WTC11 (cell line): ENCODE measurements at regions of chr1 and their contacts with region 1.

Region 1: DNA sequence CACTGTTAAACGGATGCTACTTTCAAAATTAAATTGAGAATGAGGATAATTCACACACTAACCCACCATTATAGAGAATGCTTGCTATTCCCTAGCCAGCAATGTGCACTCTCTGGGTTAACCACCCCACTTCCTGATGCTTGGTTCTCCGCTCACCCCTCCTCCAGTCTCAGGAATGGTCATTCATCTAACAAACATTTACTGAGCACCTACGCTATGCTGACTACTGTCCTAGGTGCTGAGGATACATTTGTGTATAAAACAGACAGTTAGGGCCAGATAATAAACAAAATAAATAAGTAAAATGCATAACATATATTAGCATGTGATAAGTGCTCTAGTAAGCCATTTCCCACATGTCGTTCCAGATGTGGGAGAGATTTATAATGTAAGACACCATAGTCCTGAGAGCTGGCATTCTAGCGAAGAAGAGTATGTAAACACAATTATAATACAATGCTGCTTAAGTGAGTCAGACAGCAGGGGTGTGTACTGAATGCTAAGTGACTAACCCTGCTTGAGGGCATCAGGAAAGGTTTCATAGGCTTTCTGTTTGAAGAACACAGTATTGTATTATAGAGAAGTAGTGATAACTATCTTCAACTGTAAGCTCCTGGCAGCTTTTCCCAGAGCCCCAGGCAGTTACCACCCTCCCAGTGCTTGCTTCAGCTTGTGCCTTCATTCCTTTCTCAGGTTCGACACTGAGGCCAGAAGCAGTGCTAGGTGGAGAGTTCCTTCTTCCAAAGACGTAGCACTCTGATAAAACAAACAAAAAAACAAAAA is 126.6 kb upstream of the CACHD1 start:
- DNase-seq: no peak
- ATAC-seq: peak; percentile 67
- H3K4me3 Mint-ChIP-seq: no peak overlapping the region
- H3K27ac Mint-ChIP-seq: no peak overlapping the region
- H3K4me1 Mint-ChIP-seq: peaks cover 20% of the 10 kb centered on the region
- H3K27me3 Mint-ChIP-seq: no peaks in the 10 kb centered on the region; the same call in 1 of the 2 replicates
- CTCF ChIP-seq: no peak

Region 2: DNA sequence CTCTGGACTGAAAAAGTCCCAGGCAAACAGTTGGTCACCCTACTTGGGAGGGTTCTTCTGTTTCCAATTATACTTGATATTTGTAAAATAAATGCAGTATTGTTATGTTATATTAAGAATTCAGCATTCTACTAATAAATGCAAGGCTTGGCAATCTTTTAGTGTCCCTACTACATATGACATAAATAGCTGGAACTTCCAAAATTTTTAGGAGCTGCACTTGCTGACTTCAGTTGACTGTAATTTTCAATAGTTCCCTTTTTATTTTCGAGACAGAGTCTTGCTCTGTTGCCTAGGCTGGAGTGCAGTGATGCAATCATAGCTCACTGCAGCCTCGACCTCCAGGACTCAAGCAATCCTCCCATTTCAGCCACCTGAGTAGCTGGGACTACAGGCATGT is 1000.9 kb before region 1 on chr1:
- CTCF ChIA-PET with region 1: no interaction called
- POLR2A ChIA-PET with region 1: interaction called, 11 read pairs
- DNase-seq: no peak
- ATAC-seq: no peak
- H3K4me3 Mint-ChIP-seq: no peak overlapping the region
- H3K27ac Mint-ChIP-seq: no peak overlapping the region
- H3K4me1 Mint-ChIP-seq: peaks cover 18% of the 10 kb centered on the region
- H3K27me3 Mint-ChIP-seq: no peaks in the 10 kb centered on the region
- CTCF ChIP-seq: no peak

Region 3: GRCh38 chr1:64280001-64280400 is 63.3 kb before region 1 on chr1:
- CTCF ChIA-PET with region 1: no interaction called
- POLR2A ChIA-PET with region 1: no interaction called
- DNase-seq: no peak
- ATAC-seq: no peak
- H3K4me3 Mint-ChIP-seq: no peak overlapping the region
- H3K27ac Mint-ChIP-seq: no peak overlapping the region
- H3K4me1 Mint-ChIP-seq: peaks cover 13% of the 10 kb centered on the region
- H3K27me3 Mint-ChIP-seq: no peaks in the 10 kb centered on the region; the same call in 1 of the 2 replicates
- CTCF ChIP-seq: no peak

Region 4: DNA sequence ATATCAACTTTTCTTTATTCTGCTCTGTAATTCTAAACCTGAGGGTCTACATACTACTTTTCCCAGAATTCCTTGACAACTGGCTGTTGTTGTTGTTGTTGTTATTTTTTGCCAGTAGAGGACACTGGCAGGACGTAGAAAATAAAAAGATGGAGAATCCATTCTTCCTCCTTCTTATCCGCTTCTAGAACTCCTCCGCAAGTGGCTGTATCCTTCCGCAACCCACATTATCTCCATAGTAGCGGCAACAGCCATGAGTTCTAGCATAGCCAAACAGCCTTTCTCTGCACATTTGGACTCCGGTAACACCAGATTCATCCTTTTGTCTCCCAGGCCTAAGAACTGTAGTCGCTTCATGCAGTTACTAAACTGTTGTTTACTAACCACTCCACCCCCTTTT is 35.5 kb after region 1 on chr1:
- CTCF ChIA-PET with region 1: no interaction called
- POLR2A ChIA-PET with region 1: no interaction called
- DNase-seq: peak; percentile 42
- ATAC-seq: peak; percentile 90
- H3K4me3 Mint-ChIP-seq: no peak overlapping the region
- H3K27ac Mint-ChIP-seq: no peak overlapping the region
- H3K4me1 Mint-ChIP-seq: peaks cover 8% of the 10 kb centered on the region
- H3K27me3 Mint-ChIP-seq: no peaks in the 10 kb centered on the region; the same call in 1 of the 2 replicates
- CTCF ChIP-seq: no peak